ENCODE measurements at regions of chr11 and their contacts with region 1.

Region 1: DNA sequence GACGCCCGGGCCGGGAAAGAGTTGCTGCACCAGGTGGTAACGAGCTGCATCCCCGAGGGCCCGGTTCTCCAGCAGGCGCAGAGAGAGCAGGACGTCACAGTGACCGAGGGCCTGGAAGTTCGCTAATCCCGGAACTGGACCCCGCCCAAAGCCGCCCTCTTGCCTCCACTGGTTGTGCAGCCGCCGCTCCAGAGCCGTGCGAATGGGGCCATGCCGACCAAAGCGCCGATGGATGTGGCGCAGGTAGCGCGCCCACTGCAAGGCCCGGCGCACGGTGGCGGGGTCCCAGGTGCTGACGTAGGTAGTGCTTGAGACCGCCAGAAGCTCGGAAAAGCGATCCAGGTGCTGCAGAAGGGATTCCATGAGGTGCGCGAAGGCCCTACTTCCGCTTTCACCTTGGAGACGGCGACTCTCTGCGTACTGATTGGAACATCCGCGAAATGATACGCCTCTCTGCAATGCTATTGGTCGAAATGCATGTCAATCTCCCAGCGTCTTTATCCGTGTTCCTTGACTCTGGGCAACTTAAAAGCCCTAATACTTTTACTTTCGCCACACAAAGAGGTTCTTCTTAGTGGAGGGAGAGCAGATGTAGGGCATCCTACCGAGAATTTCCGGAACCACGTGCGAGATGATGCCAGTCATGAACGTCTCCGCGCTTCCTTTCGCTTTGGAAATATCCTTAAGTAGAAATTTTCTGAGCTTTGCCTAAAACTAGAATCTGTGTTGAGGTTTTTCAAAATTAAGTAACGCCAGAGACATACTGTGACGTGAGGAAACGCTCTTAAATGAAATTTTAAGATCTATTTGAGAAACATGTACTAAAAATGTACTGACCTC is at the start of gene FANCF:
- DNase-seq: peak; percentile 73 to 97 (median 95)
- ATAC-seq: peak; percentile 96
- H3K4me3 ChIP-seq: peak within 1 kb of the TSS; percentile 98
- H3K4me3 Mint-ChIP-seq: peak within 1 kb of the TSS; percentile 93 to 99 (median 98)
- H3K27ac ChIP-seq: peak within 1 kb of the TSS; percentile 87
- H3K27ac Mint-ChIP-seq: peak within 1 kb of the TSS; percentile 92 to 99 (median 97)
- H3K4me1 ChIP-seq: peaks cover 15 to 31% of the 10 kb centered on the region in 2 donors
- H3K4me1 Mint-ChIP-seq: peaks cover 27 to 57% (median 49%) of the 10 kb centered on the region in 7 donors
- H3K27me3 ChIP-seq: no peaks in the 10 kb centered on the region
- H3K27me3 Mint-ChIP-seq: no peaks in the 10 kb centered on the region
- total RNA-seq, gene FANCF: 7.4 to 22.6 (median 19.5) TPM

Region 2: GRCh38 chr11:22337596-22338485 is 287.8 kb before region 1 on chr11 and contains the start of gene SLC17A6:
- CTCF ChIA-PET with region 1: interaction called, 4 read pairs
- POLR2A ChIA-PET with region 1: no interaction called
- intact Hi-C with region 1: loop called in 1 of 2 experiments (anchors 10 kb)
- DNase-seq: peak in 2 of 9 donors; percentile 12 to 31
- ATAC-seq: no peak
- H3K4me3 ChIP-seq: no peak within 1 kb of the TSS
- H3K4me3 Mint-ChIP-seq: no peak within 1 kb of the TSS
- H3K27ac ChIP-seq: no peak within 1 kb of the TSS
- H3K27ac Mint-ChIP-seq: no peak within 1 kb of the TSS
- H3K4me1 ChIP-seq: peaks cover 0 to 3% of the 10 kb centered on the region in 2 donors
- H3K4me1 Mint-ChIP-seq: peaks cover 7 to 21% (median 12%) of the 10 kb centered on the region in 7 donors
- H3K27me3 ChIP-seq: peaks cover 4 to 15% of the 10 kb centered on the region in 2 donors
- H3K27me3 Mint-ChIP-seq: peaks cover 55 to 73% (median 61%) of the 10 kb centered on the region in 5 donors
- total RNA-seq, gene SLC17A6: not detected

Region 3: GRCh38 chr11:22426915-22427314 is 198.8 kb before region 1 on chr11:
- CTCF ChIA-PET with region 1: no interaction called
- POLR2A ChIA-PET with region 1: no interaction called
- intact Hi-C with region 1: no loop called
- DNase-seq: no peak
- ATAC-seq: no peak
- H3K4me3 ChIP-seq: no peak overlapping the region
- H3K4me3 Mint-ChIP-seq: no peak overlapping the region
- H3K27ac ChIP-seq: no peak overlapping the region
- H3K27ac Mint-ChIP-seq: no peak overlapping the region
- H3K4me1 ChIP-seq: no peaks in the 10 kb centered on the region
- H3K4me1 Mint-ChIP-seq: peaks cover 0 to 3% (median 1%) of the 10 kb centered on the region in 7 donors
- H3K27me3 ChIP-seq: no peaks in the 10 kb centered on the region
- H3K27me3 Mint-ChIP-seq: peaks cover 2 to 28% (median 14%) of the 10 kb centered on the region in 5 donors

Region 4: GRCh38 chr11:22666688-22667439 is 41.2 kb after region 1 on chr11:
- CTCF ChIA-PET with region 1: no interaction called
- POLR2A ChIA-PET with region 1: no interaction called
- intact Hi-C with region 1: loop called in 1 of 2 experiments (anchors 2 kb)
- DNase-seq: peak in 4 of 9 donors; percentile 11 to 32 (median 20)
- ATAC-seq: peak; percentile 31
- H3K4me3 ChIP-seq: no peak overlapping the region
- H3K4me3 Mint-ChIP-seq: peak overlapping the region; percentile 49 to 94 (median 73)
- H3K27ac ChIP-seq: no peak overlapping the region
- H3K27ac Mint-ChIP-seq: peak overlapping the region in 1 of 9 donors; percentile 54
- H3K4me1 ChIP-seq: peaks cover 0 to 5% of the 10 kb centered on the region in 2 donors
- H3K4me1 Mint-ChIP-seq: peaks cover 9 to 24% (median 13%) of the 10 kb centered on the region in 7 donors
- H3K27me3 ChIP-seq: peaks cover 5 to 7% of the 10 kb centered on the region in 2 donors
- H3K27me3 Mint-ChIP-seq: peaks cover 60 to 67% (median 66%) of the 10 kb centered on the region in 5 donors

Region 5: DNA sequence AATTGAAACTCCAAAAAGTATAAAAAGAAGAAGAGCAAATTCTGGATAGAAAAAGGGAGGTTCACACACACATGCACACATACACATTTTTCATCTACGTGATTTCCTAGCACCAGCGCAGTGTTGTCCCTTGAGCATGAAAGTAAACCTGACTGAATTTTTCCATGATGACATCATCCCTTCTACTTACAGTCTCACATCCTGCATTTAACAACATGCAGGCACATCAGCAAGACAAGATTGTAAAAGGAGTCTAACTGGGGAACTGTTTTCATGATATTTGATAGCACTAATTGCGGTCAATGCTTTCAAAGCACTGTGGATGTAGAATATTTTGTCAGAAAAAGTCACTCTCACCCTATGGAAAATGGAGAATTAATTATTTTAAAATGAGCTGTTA is 77.4 kb after region 1 on chr11:
- CTCF ChIA-PET with region 1: interaction called, 3 read pairs
- POLR2A ChIA-PET with region 1: no interaction called
- intact Hi-C with region 1: loop called in 1 of 2 experiments (anchors 5 kb)
- DNase-seq: peak in 4 of 9 donors; percentile 20 to 37 (median 27)
- ATAC-seq: no peak
- H3K4me3 ChIP-seq: no peak overlapping the region
- H3K4me3 Mint-ChIP-seq: peak overlapping the region in 1 of 10 donors; percentile 23
- H3K27ac ChIP-seq: no peak overlapping the region
- H3K27ac Mint-ChIP-seq: peak overlapping the region in 1 of 9 donors; percentile 24
- H3K4me1 ChIP-seq: no peaks in the 10 kb centered on the region
- H3K4me1 Mint-ChIP-seq: peaks cover 0 to 23% (median 12%) of the 10 kb centered on the region in 7 donors
- H3K27me3 ChIP-seq: no peaks in the 10 kb centered on the region
- H3K27me3 Mint-ChIP-seq: peaks cover 0 to 5% (median 0%) of the 10 kb centered on the region in 5 donors

Region 6: DNA sequence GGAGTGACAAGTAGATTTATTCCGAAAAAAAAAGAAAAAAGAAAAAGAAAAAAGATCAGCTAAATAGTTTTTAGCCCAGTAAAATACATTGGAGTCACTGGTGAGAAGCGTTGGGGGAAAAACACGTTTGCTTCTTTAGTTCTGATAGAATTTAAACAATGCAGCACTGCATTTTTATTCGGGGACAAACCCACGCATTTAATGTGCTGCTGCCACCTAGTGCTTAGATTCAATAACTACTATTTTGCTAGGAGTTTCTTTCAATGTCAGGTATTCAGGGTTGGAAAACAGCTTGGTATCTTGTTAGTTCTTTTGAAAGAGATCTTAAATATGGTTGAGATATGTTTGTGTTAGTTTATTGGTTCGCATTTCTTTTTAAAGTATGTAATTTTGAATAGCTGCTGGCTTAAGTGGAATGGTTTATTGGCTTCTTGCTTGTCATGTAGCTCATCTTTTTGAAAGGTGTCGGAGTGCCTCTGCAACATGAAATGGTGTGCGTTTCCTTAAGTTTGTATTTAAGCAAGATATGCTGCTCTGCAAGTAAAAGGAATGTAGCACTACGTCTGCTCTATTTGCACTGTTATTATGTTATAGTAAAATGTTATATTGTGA is 162.0 kb after region 1 on chr11:
- CTCF ChIA-PET with region 1: no interaction called
- POLR2A ChIA-PET with region 1: no interaction called
- intact Hi-C with region 1: loop called in 1 of 2 experiments (anchors 5 kb)
- DNase-seq: peak in 7 of 9 donors; percentile 20 to 54 (median 39)
- ATAC-seq: peak; percentile 61
- H3K4me3 ChIP-seq: no peak overlapping the region
- H3K4me3 Mint-ChIP-seq: no peak overlapping the region
- H3K27ac ChIP-seq: no peak overlapping the region
- H3K27ac Mint-ChIP-seq: no peak overlapping the region
- H3K4me1 ChIP-seq: no peaks in the 10 kb centered on the region
- H3K4me1 Mint-ChIP-seq: peaks cover 0 to 1% (median 0%) of the 10 kb centered on the region in 7 donors
- H3K27me3 ChIP-seq: no peaks in the 10 kb centered on the region
- H3K27me3 Mint-ChIP-seq: peaks cover 0 to 5% (median 3%) of the 10 kb centered on the region in 5 donors

Measured in naive thymus-derived CD4-positive, alpha-beta T cell (primary cell).